ENCODE measurements at regions of chr12 and their contacts with region 1.

Region 1: GRCh38 chr12:122449353-122449752 is 26.9 kb upstream of the CLIP1 start:
- DNase-seq: no peak
- H3K4me3 Mint-ChIP-seq: no peak overlapping the region
- H3K27ac Mint-ChIP-seq: no peak overlapping the region
- H3K4me1 Mint-ChIP-seq: peaks cover 29% of the 10 kb centered on the region
- H3K27me3 Mint-ChIP-seq: peaks cover 4% of the 10 kb centered on the region

Region 2: GRCh38 chr12:122726080-122726558 is 276.8 kb after region 1 on chr12:
- intact Hi-C with region 1: loop called (anchors 5 kb)
- DNase-seq: peak; percentile 78
- H3K4me3 Mint-ChIP-seq: peak overlapping the region; percentile 68
- H3K27ac Mint-ChIP-seq: peak overlapping the region; percentile 92
- H3K4me1 Mint-ChIP-seq: peaks cover 59% of the 10 kb centered on the region
- H3K27me3 Mint-ChIP-seq: no peaks in the 10 kb centered on the region